Right cardiac atrium (tissue), 5 donors: ENCODE measurements at regions of chr1 and their contacts with region 1.

Region 1: DNA sequence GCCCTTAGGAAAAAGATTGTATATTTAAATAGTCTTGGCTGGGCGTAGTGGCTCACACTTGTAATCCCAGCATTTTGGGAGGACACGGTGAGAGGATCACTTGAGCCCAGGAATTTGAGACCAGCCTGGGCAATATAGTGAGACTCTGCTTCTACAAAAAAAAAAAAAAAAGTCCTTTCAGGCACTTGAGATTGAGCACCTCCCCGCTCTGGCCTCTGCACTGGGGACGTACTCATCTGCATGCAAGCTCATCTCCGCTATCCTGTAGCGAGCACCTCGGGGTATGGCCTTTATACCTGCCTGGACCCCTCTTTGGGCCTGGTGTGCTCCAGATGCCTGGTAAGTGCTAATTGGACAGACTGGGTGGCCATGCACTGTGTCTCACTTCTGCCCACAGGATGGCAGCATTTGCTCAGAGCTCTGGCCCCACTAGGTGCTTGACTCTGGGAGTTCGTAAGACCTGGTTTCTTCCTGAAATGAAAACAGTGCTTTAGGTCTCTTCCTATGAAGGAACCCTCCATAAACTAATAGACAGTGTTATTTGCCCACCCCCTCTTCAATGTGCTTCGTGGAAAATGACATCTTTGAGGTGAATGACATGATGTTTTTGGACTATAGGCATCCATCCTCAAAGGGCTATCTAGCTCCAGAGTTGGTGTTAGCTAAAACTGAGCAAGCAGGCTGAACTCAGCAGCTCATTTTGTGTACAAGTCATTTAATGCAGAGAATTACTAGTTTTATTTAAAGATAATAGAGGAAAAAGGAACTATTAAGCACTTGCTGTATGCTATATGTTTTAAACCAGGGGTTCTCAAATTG is 61.7 kb upstream of the ADAR start:
- DNase-seq: peak; percentile 73 to 88 (median 85)
- ATAC-seq: peak; percentile 96 to 98
- H3K4me3 ChIP-seq: no peak overlapping the region
- H3K27ac ChIP-seq: no peak overlapping the region
- H3K4me1 ChIP-seq: no peaks in the 10 kb centered on the region
- H3K27me3 ChIP-seq: no peaks in the 10 kb centered on the region

Region 2: GRCh38 chr1:154607106-154607608 is 62.5 kb before region 1 on chr1:
- intact Hi-C with region 1: no loop called
- DNase-seq: no peak
- ATAC-seq: peak; percentile 5 to 29
- H3K4me3 ChIP-seq: peak overlapping the region; percentile 85
- H3K27ac ChIP-seq: peak overlapping the region; percentile 95
- H3K4me1 ChIP-seq: peaks cover 12% of the 10 kb centered on the region
- H3K27me3 ChIP-seq: no peaks in the 10 kb centered on the region

Region 3: DNA sequence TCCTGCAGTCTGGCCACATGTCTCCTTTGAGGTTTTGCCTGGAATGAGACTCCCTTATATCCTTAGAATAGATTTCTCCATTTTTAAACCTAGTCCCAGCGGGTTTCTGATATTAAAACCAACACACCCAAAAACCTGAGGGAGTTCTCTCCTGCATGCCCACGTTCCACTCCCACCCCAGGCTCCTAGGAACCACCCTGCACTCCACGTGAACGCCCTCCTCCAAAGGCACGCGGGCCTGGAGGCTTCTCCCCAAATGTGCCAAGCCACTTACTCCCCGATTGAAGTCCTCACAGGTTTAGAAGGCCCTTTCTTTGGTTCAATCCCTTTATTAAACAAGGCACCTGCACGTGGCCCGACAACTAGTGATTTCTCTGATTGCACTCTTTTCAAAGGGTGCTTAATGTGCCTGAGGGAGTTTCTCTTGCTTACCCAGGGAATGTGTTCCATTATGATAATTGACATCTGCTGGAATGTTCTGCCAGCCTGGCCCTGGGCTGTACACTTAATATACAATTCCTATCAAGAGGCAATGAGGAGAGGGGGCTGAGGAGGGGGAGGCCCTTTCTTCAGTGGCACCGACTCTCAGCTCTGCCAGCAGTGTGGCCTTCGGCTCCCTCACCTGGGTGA is 42.6 kb after region 1 on chr1:
- intact Hi-C with region 1: loop called in 1 of 4 experiments (anchors 2 kb)
- DNase-seq: no peak
- ATAC-seq: no peak
- H3K4me3 ChIP-seq: no peak overlapping the region
- H3K27ac ChIP-seq: no peak overlapping the region
- H3K4me1 ChIP-seq: no peaks in the 10 kb centered on the region
- H3K27me3 ChIP-seq: no peaks in the 10 kb centered on the region

Region 4: GRCh38 chr1:154751690-154752089 is 82.0 kb after region 1 on chr1:
- intact Hi-C with region 1: loop called in 1 of 4 experiments (anchors 10 kb)
- DNase-seq: no peak
- ATAC-seq: peak; percentile 47 to 54
- H3K4me3 ChIP-seq: no peak overlapping the region
- H3K27ac ChIP-seq: no peak overlapping the region
- H3K4me1 ChIP-seq: no peaks in the 10 kb centered on the region
- H3K27me3 ChIP-seq: no peaks in the 10 kb centered on the region

Region 5: GRCh38 chr1:154760469-154760933 is 90.8 kb after region 1 on chr1:
- intact Hi-C with region 1: loop called in 3 of 4 experiments (anchors 5 to 10 kb)
- DNase-seq: peak; percentile 63 to 88 (median 82)
- ATAC-seq: peak; percentile 88 to 91
- H3K4me3 ChIP-seq: peak overlapping the region; percentile 13
- H3K27ac ChIP-seq: no peak overlapping the region
- H3K4me1 ChIP-seq: no peaks in the 10 kb centered on the region
- H3K27me3 ChIP-seq: no peaks in the 10 kb centered on the region

Region 6: DNA sequence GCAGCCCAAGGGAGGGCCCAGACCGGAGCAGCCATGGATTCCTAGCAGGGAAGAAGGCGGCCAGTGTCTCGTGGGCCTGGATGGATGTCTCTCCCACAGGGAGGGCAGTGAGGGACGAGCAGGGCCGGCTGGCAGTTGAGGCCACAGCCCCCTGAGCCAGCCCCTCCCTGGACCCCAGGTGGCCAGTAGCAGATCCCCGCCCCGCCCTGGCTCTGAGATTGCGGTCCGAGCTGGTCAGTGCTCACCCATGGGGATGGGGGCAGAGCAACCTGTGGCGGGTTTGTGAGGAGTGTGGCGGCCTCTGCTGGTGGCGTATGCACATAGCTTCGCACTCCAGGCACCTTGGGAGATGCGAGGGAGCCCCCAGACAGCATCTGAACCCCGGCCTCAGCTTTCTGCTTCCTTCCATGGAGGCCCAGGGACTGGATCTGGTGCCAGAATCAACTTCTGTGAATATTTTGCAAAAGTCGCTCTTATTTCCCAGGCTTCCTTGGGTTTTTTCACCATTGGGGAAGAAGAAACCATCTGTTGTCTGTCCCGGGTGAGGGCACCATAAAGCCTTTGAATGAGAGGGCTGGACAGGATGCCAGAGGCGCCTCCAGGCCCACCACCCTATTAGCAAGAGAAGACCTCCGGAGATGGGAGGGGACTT is 208.8 kb after region 1 on chr1:
- intact Hi-C with region 1: loop called (anchors 2 to 5 kb)
- DNase-seq: peak; percentile 80 to 92 (median 92)
- ATAC-seq: peak; percentile 91
- H3K4me3 ChIP-seq: no peak overlapping the region
- H3K27ac ChIP-seq: no peak overlapping the region
- H3K4me1 ChIP-seq: peaks cover 3% of the 10 kb centered on the region
- H3K27me3 ChIP-seq: no peaks in the 10 kb centered on the region

Region 7: DNA sequence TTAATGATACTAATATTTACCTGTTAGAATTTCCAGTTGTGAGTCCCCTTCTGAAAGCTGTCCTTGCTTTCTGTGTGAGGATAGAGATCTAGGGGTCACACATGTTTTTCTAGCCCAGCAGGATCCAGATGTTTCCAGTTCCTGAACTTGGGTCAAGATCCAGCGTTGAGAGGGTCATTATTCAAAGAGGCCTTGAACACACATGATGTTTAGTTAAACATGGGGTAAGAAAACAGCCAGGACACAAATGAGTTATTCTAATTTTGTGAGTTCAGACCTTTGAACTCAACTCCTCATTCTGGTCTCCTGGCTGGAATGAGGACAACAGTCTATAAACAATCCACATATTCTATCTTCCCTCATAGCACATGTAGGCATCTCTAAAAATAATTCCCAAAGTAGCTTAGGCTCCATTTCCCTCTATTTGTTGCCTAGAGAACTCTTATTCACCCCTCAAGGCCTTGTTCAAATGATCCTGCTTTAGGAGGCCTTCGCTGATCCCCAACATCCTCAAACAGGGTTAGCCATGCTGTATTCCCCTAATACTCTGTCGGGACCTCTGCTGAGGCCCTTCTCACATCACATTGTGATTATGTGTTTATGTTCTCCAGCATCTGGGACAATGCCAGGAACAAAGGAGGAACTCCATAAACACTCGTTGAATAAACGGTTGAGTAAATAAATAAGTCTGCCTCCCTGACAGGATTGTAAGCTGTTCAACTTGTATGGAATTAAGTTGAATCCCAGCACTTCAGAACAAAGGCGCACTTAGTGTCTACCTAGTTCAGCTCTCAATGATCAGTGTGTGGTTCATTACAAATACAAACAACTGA is 215.4 kb after region 1 on chr1:
- intact Hi-C with region 1: loop called in 1 of 4 experiments (anchors 5 kb)
- DNase-seq: no peak
- ATAC-seq: no peak
- H3K4me3 ChIP-seq: no peak overlapping the region
- H3K27ac ChIP-seq: no peak overlapping the region
- H3K4me1 ChIP-seq: peaks cover 8% of the 10 kb centered on the region
- H3K27me3 ChIP-seq: no peaks in the 10 kb centered on the region